Activated T-helper 2 cell treated with anti-CD3 and anti-CD28 coated beads, Interferon-gamma antibody, Interleukin-2, Interleukin-4, amounts not matched to agents 10 μg/mL and 5 μg/mL and 100 μg/mL, durations not matched to agents 14 hours and 24 hours and 36 hours (primary cell): ENCODE measurements at regions of chr6 and their contacts with region 1.

Region 1: GRCh38 chr6:21826023-21826422 is 232.5 kb downstream of the SOX4 start:
- DNase-seq: no peak
- H3K4me3 Mint-ChIP-seq: no peak overlapping the region
- H3K27ac Mint-ChIP-seq: no peak overlapping the region
- H3K4me1 Mint-ChIP-seq: peaks cover 22% of the 10 kb centered on the region
- H3K27me3 Mint-ChIP-seq: no peaks in the 10 kb centered on the region

Region 2: DNA sequence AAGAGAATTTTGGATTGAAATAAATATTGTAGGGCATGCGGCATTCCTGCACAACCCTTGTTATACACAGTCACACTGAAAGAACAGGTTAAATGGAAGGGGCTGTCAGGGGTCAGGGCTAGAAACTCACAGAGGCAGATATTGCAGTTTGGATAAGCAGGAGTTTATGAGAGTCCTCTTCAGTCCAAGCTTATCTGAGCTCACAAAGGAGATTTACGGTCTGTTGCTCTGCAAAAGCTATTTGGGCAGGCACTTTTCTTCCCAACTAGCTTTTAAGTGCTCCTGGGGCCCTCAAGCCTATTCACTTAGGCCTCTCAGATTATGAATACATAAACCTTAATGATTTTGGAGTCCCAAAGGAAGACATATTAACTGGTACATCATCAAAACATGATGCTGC is 76.3 kb before region 1 on chr6:
- intact Hi-C with region 1: loop called (anchors 2 kb)
- DNase-seq: no peak
- H3K4me3 Mint-ChIP-seq: no peak overlapping the region
- H3K27ac Mint-ChIP-seq: no peak overlapping the region
- H3K4me1 Mint-ChIP-seq: peaks cover 21% of the 10 kb centered on the region
- H3K27me3 Mint-ChIP-seq: no peaks in the 10 kb centered on the region

Region 3: DNA sequence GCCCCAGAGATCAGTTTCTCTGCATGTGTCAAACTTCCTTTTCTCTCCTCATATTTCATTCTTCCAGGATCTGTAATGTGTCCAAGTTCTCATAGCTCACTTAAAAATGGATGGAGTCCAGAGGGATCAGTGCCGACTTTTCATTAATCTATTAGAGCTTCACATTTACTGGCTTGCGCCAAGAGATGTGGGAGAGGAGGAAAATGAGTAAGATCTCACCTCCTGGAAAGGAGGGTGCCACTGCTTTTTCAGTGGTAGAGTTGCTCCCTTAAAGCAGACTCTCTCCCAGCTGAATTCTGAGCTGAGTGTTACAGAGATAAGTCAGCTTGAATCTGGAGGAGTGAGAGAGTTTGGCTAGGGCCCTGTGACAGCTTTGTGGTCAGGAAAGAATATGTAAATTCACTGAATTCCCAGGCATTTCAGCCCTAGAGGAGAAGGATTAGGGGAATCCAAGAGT is 56.6 kb before region 1 on chr6:
- intact Hi-C with region 1: no loop called
- DNase-seq: no peak
- H3K4me3 Mint-ChIP-seq: no peak overlapping the region
- H3K27ac Mint-ChIP-seq: no peak overlapping the region
- H3K4me1 Mint-ChIP-seq: peaks cover 11% of the 10 kb centered on the region
- H3K27me3 Mint-ChIP-seq: peaks cover 2% of the 10 kb centered on the region